ENCODE measurements at regions of chr11 and their contacts with region 1.

Region 1: GRCh38 chr11:67118801-67119584 is at the start of gene KDM2A:
- DNase-seq: peak; percentile 100
- H3K4me3 ChIP-seq: peak within 1 kb of the TSS; percentile 82 to 100
- H3K27ac ChIP-seq: peak within 1 kb of the TSS; percentile 74 to 85
- H3K4me1 ChIP-seq: peaks cover 0 to 9% of the 10 kb centered on the region in 2 experiments; a peak in 3 of 4 replicates
- H3K27me3 ChIP-seq: no peaks in the 10 kb centered on the region
- CTCF ChIP-seq: no peak
- EP300 ChIP-seq: no peak
- RAD21 ChIP-seq: peak; percentile 21; the same call in 1 of the 2 replicates
- polyA plus RNA-seq, gene KDM2A: 28.4 and 30.8 TPM in 2 replicates

Region 2: GRCh38 chr11:66787912-66788758 is 330.9 kb before region 1 on chr11:
- CTCF ChIA-PET with region 1: no interaction called
- POLR2A ChIA-PET with region 1: no interaction called
- DNase-seq: no peak
- H3K4me3 ChIP-seq: no peak overlapping the region
- H3K27ac ChIP-seq: no peak overlapping the region
- H3K4me1 ChIP-seq: no peaks in the 10 kb centered on the region; a peak in 1 of 4 replicates
- H3K27me3 ChIP-seq: no peaks in the 10 kb centered on the region
- CTCF ChIP-seq: no peak
- EP300 ChIP-seq: no peak
- RAD21 ChIP-seq: no peak

Region 3: GRCh38 chr11:67022328-67022927 is 96.6 kb before region 1 on chr11:
- CTCF ChIA-PET with region 1: no interaction called
- POLR2A ChIA-PET with region 1: no interaction called
- DNase-seq: peak; percentile 69
- H3K4me3 ChIP-seq: peak overlapping the region; percentile 46 to 53
- H3K27ac ChIP-seq: no peak overlapping the region
- H3K4me1 ChIP-seq: peaks cover 8 to 13% of the 10 kb centered on the region in 2 experiments; a peak in 2 of 4 replicates
- H3K27me3 ChIP-seq: no peaks in the 10 kb centered on the region
- CTCF ChIP-seq: no peak
- EP300 ChIP-seq: 0 out of 4 replicates have a peak, but pooled peaks of 1 of the 2 experiments have one; percentile 7
- RAD21 ChIP-seq: no peak

Region 4: GRCh38 chr11:67105964-67106363 is 13.0 kb before region 1 on chr11:
- CTCF ChIA-PET with region 1: interaction called, 14 read pairs
- POLR2A ChIA-PET with region 1: no interaction called
- DNase-seq: no peak
- H3K4me3 ChIP-seq: no peak overlapping the region
- H3K27ac ChIP-seq: no peak overlapping the region
- H3K4me1 ChIP-seq: no peaks in the 10 kb centered on the region; a peak in 1 of 4 replicates
- H3K27me3 ChIP-seq: no peaks in the 10 kb centered on the region
- CTCF ChIP-seq: no peak
- EP300 ChIP-seq: no peak
- RAD21 ChIP-seq: no peak

Region 5: GRCh38 chr11:67468835-67469811 is 350.1 kb after region 1 on chr11 and contains the start of gene TMEM134:
- CTCF ChIA-PET with region 1: no interaction called
- POLR2A ChIA-PET with region 1: no interaction called
- DNase-seq: peak; percentile 98
- H3K4me3 ChIP-seq: peak within 1 kb of the TSS; percentile 73 to 90
- H3K27ac ChIP-seq: peak within 1 kb of the TSS; percentile 66 to 72; a peak in 3 of 4 replicates
- H3K4me1 ChIP-seq: peaks cover 3 to 30% of the 10 kb centered on the region in 2 experiments; a peak in 2 of 4 replicates
- H3K27me3 ChIP-seq: no peaks in the 10 kb centered on the region
- CTCF ChIP-seq: peak; percentile 50
- EP300 ChIP-seq: no peak
- RAD21 ChIP-seq: peak; percentile 58
- polyA plus RNA-seq, gene TMEM134: 132 and 135 TPM in 2 replicates